ENCODE measurements at regions of chr16 and their contacts with region 1.

Region 1: GRCh38 chr16:23060458-23061320 is 88.6 kb downstream of the USP31 start:
- DNase-seq: peak; percentile 78
- H3K4me3 ChIP-seq: no peak overlapping the region
- H3K27ac ChIP-seq: no peak overlapping the region
- H3K4me1 ChIP-seq: no peaks in the 10 kb centered on the region
- H3K27me3 ChIP-seq: no peaks in the 10 kb centered on the region
- CTCF ChIP-seq: peak; percentile 70 to 74
- POLR2A ChIP-seq: no peak

Region 2: GRCh38 chr16:21626659-21627277 is 1433.9 kb before region 1 on chr16:
- CTCF ChIA-PET with region 1: no interaction called
- POLR2A ChIA-PET with region 1: no interaction called
- dilution Hi-C with region 1: no loop called
- intact Hi-C with region 1: loop called (anchors 10 kb)
- DNase-seq: peak; percentile 68
- H3K4me3 ChIP-seq: no peak overlapping the region
- H3K27ac ChIP-seq: peak overlapping the region; percentile 54
- H3K4me1 ChIP-seq: peaks cover 14% of the 10 kb centered on the region
- H3K27me3 ChIP-seq: no peaks in the 10 kb centered on the region
- CTCF ChIP-seq: no peak
- POLR2A ChIP-seq: no peak

Region 3: DNA sequence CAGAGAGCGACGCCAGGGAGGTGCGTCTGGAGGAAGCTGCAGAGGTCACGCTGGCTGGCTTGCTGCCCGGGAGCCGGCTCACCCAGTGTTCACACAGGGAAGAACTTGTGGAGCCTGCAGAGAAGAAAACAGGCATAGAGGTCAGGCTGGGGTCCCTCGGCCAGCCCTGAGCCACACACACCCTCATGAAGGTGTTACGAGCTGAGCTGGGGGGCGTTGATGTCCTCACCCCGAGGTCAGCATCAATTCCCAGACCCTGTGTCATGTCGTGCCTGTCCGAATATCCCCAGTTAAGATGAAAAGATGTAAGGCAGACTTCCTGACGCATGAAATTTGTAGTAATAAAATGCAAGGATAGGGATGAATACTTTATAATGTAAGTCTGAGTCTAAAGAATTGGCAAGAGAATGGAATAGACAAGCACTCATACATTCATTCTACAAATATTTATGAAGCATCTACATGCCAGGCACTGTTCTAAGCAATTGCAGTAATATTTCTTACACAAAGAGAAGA is 11.5 kb after region 1 on chr16:
- CTCF ChIA-PET with region 1: interaction called, 18 read pairs
- POLR2A ChIA-PET with region 1: no interaction called
- dilution Hi-C with region 1: no loop called
- intact Hi-C with region 1: no loop called
- DNase-seq: peak; percentile 90
- H3K4me3 ChIP-seq: no peak overlapping the region
- H3K27ac ChIP-seq: peak overlapping the region; percentile 44
- H3K4me1 ChIP-seq: peaks cover 15% of the 10 kb centered on the region
- H3K27me3 ChIP-seq: no peaks in the 10 kb centered on the region
- CTCF ChIP-seq: no peak
- POLR2A ChIP-seq: no peak

Region 4: DNA sequence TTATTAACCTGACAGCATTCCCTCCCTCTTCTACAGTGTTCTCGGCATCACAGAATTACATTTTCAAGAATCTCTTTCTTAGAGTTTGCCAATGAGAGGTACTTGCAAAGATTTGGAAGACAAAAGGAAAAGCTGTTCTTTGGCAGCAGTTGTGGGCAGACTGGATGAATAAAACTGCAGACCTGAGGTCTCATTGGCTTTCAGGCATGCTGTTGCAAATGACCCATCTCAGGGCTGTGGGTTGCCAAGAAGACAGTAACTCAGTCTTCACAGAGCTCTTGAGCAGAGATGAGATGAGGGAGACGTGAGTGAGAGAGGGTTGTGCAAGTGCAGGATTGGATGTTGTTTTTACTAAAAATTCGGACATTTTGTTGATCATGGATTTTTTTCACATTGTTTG is 99.9 kb after region 1 on chr16:
- CTCF ChIA-PET with region 1: no interaction called
- POLR2A ChIA-PET with region 1: no interaction called
- dilution Hi-C with region 1: no loop called
- intact Hi-C with region 1: no loop called
- DNase-seq: no peak
- H3K4me3 ChIP-seq: no peak overlapping the region
- H3K27ac ChIP-seq: no peak overlapping the region
- H3K4me1 ChIP-seq: no peaks in the 10 kb centered on the region
- H3K27me3 ChIP-seq: peaks cover 5 to 8% of the 10 kb centered on the region in 2 experiments
- CTCF ChIP-seq: no peak
- POLR2A ChIP-seq: no peak

Measured in endothelial cell of umbilical vein (primary cell).